Naive thymus-derived CD4-positive, alpha-beta T cell (primary cell): ENCODE measurements at regions of chr6 and their contacts with region 1.

Region 1: GRCh38 chr6:118893807-118894424 is at the start of gene ASF1A:
- DNase-seq: peak; percentile 94 to 98 (median 97)
- ATAC-seq: peak; percentile 90
- H3K4me3 ChIP-seq: peak within 1 kb of the TSS; percentile 77
- H3K4me3 Mint-ChIP-seq: peak within 1 kb of the TSS; percentile 88 to 97 (median 94)
- H3K27ac ChIP-seq: peak within 1 kb of the TSS; percentile 91
- H3K27ac Mint-ChIP-seq: peak within 1 kb of the TSS; percentile 96 to 99 (median 99)
- H3K4me1 ChIP-seq: peaks cover 47 to 52% of the 10 kb centered on the region in 2 donors
- H3K4me1 Mint-ChIP-seq: peaks cover 39 to 76% (median 69%) of the 10 kb centered on the region in 7 donors
- H3K27me3 ChIP-seq: no peaks in the 10 kb centered on the region
- H3K27me3 Mint-ChIP-seq: peaks cover 0 to 2% (median 0%) of the 10 kb centered on the region in 5 donors
- total RNA-seq, gene ASF1A: 16.5 to 63.9 (median 35.7) TPM

Region 2: DNA sequence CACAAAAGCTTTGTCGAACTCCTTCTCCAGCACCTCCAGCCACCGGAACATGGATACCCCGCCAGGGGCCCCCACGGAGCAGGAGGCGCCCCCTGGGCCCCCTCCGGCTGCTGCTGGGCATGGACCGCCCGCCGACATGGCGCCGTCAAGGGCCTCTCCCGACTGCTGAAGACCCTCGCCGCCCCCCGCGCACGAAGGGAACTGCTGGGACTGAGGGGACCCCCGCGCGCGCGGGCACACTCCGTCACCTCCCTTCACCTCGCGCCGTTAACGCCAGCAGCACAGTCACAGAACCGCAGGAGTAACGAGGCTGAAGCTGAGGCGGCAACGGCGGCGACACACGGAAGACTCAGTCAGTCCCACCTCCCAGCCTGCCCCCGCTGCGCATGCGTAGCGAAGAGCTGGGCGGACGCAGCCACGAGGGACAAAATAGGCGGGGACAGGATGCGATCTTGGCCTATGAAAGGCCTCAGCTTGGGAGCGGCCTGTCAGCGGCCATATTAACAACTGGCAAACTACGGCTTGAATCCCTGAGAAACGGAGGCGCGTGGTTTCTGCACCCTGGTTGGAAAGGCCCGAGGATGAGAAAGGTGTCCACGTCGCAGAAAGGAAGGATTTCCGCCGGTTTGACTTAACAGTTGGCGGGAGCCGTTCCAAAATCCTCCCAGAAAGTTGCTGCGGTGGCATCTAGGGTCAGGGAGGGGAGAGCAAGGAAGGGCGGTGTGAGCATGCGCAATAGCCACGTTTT is 1291.6 kb before region 1 on chr6 and contains the start of gene GOPC:
- CTCF ChIA-PET with region 1: no interaction called
- POLR2A ChIA-PET with region 1: no interaction called
- intact Hi-C with region 1: loop called in 1 of 2 experiments (anchors 1 kb)
- DNase-seq: peak; percentile 87 to 97 (median 96)
- ATAC-seq: peak; percentile 97
- H3K4me3 ChIP-seq: peak within 1 kb of the TSS; percentile 93
- H3K4me3 Mint-ChIP-seq: peak within 1 kb of the TSS; percentile 96 to 100 (median 99)
- H3K27ac ChIP-seq: peak within 1 kb of the TSS; percentile 92
- H3K27ac Mint-ChIP-seq: peak within 1 kb of the TSS; percentile 94 to 99 (median 99)
- H3K4me1 ChIP-seq: peaks cover 0 to 9% of the 10 kb centered on the region in 2 donors
- H3K4me1 Mint-ChIP-seq: peaks cover 24 to 58% (median 49%) of the 10 kb centered on the region in 7 donors
- H3K27me3 ChIP-seq: no peaks in the 10 kb centered on the region
- H3K27me3 Mint-ChIP-seq: peaks cover 0 to 5% (median 4%) of the 10 kb centered on the region in 5 donors
- total RNA-seq, gene GOPC: 16.2 to 39.4 (median 26.5) TPM

Region 3: DNA sequence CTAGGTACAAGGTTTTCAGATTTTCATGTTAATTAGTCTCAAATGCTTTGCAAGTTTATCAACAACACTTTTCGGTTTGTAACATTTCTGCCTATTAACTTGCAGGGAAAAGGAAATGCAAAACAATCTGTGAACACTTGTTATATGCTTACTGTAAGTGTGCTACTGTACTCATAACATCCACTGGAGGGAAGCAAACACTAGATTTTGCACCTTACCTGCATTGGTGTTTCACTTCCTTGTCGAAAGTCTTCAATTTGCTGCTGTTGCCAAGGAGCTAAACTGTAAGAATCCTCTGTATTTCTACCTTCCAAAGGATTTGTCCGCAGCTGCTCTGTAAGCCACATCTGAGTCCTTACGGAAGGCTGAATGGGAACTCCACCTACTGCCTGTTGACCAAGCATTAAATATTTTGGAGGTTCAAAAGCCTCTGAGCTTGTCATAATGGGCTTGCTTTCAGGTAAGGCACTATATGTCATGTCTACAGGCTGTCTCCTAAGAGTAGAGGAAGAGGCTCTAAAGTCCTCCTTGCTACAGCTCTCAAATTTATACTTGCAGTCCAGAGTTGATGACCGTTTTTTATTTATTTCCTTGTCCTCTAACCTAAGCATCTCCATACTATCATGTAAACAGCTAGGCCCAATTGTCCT is 328.5 kb before region 1 on chr6:
- CTCF ChIA-PET with region 1: interaction called, 6 read pairs
- POLR2A ChIA-PET with region 1: interaction called, 19 read pairs
- intact Hi-C with region 1: loop called (anchors 1 kb)
- DNase-seq: peak in 7 of 9 donors; percentile 55 to 77 (median 63)
- ATAC-seq: peak; percentile 94
- H3K4me3 ChIP-seq: no peak overlapping the region
- H3K4me3 Mint-ChIP-seq: no peak overlapping the region
- H3K27ac ChIP-seq: peak overlapping the region; percentile 34
- H3K27ac Mint-ChIP-seq: peak overlapping the region; percentile 16 to 90 (median 61)
- H3K4me1 ChIP-seq: no peaks in the 10 kb centered on the region
- H3K4me1 Mint-ChIP-seq: peaks cover 7 to 60% (median 42%) of the 10 kb centered on the region in 7 donors
- H3K27me3 ChIP-seq: no peaks in the 10 kb centered on the region
- H3K27me3 Mint-ChIP-seq: no peaks in the 10 kb centered on the region

Region 4: GRCh38 chr6:118800394-118801071 is 93.4 kb before region 1 on chr6:
- CTCF ChIA-PET with region 1: interaction called, 6 read pairs
- POLR2A ChIA-PET with region 1: interaction called, 48 read pairs
- intact Hi-C with region 1: loop called (anchors 1 kb)
- DNase-seq: peak; percentile 45 to 90 (median 86)
- ATAC-seq: peak; percentile 95
- H3K4me3 ChIP-seq: peak overlapping the region; percentile 22
- H3K4me3 Mint-ChIP-seq: peak overlapping the region; percentile 14 to 88 (median 68)
- H3K27ac ChIP-seq: no peak overlapping the region
- H3K27ac Mint-ChIP-seq: peak overlapping the region; percentile 73 to 93 (median 86)
- H3K4me1 ChIP-seq: peaks cover 17 to 25% of the 10 kb centered on the region in 2 donors
- H3K4me1 Mint-ChIP-seq: peaks cover 17 to 51% (median 37%) of the 10 kb centered on the region in 7 donors
- H3K27me3 ChIP-seq: no peaks in the 10 kb centered on the region
- H3K27me3 Mint-ChIP-seq: no peaks in the 10 kb centered on the region

Region 5: DNA sequence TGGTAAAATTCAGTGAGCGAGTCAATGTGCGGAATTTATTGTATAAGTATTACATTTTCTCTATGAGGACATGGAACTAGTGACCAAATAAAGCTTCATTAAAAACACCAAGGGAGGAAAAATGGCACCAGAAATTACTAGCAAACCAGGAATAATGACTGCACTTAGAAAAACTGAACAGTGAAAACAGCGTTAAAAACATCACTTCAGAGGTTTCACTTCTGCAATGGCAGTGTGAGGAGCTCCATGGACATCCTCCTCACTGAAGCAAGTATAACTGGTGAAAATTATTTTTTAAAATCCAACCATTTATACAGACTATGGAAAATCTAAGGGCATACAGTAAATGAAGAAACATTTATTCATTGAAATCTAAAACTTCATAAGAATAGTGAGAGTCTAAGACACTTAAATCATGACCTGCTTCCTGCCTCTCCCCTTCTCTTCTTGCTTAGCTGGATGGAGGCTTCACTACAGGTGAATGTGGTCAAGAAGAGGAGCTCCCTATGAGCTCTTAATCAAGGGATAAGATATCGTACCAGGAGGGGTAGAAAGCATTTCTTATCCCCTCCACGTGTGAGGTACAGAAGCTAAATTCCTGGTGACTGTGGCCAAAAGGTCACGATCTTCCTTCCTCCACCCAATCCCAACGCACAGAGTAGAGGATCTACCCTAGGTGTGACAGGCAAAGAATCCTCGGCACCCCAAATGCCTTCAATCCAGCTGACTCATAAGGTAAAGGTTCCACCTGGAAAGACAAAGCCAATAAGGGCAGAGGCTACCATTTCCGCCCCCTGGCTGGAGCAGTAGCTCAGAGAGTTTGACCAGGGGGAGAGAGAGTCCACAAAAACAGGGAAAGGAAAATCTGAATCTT is 12.2 kb before region 1 on chr6:
- CTCF ChIA-PET with region 1: interaction called, 5 read pairs
- POLR2A ChIA-PET with region 1: interaction called, 53 read pairs
- intact Hi-C with region 1: loop called in 1 of 2 experiments (anchors 1 kb)
- DNase-seq: no peak
- ATAC-seq: no peak
- H3K4me3 ChIP-seq: peak overlapping the region; percentile 21
- H3K4me3 Mint-ChIP-seq: peak overlapping the region; percentile 1 to 75 (median 50)
- H3K27ac ChIP-seq: no peak overlapping the region
- H3K27ac Mint-ChIP-seq: peak overlapping the region in 8 of 9 donors; percentile 1 to 88 (median 28)
- H3K4me1 ChIP-seq: peaks cover 22 to 25% of the 10 kb centered on the region in 2 donors
- H3K4me1 Mint-ChIP-seq: peaks cover 36 to 91% (median 87%) of the 10 kb centered on the region in 7 donors
- H3K27me3 ChIP-seq: no peaks in the 10 kb centered on the region
- H3K27me3 Mint-ChIP-seq: no peaks in the 10 kb centered on the region

Region 6: DNA sequence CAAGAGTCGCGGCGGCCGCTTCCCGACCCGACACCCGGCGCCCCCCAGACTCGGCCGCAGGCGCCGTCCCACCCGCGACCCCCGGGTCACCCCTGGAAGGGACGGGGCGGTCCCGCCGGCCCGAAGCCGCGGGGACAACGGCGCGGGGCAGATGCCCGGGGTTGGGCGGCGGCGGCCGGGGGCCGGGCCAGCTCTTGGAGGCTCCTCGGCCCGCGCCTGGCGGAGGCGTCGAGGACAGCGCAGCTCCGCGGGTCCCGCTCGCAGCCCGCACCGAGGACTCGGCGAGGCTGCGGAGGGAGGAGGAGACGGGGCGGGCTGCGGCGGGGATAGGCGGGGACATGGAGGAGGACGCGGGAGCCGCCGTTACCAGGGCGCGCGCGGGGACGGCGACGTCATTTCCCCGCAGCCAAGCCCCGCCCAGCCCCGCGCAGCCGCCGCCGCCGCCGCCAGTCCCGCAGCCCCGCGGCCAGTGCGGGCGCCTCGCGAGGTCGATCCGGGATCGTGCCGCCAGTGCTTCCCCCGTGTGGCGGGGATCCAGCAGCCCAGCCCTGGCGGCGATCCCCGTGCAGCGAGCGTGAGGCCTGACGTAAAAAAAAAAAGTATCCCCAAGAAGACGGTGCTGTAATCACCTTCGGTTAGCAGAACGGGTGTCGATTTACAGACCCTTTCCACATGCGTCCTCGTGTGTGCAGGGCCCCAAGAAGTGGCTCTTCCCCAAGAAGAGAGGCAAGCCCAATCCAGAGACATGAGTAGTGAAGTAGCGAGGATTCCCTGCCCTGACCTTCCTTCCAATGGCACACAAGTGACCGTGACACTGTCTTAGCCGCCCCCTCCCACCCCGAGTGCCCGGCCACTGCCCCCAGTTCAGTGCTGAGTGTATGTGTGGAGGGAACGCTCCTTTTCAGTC is 184.7 kb after region 1 on chr6 and contains the start of gene FAM184A:
- CTCF ChIA-PET with region 1: no interaction called
- POLR2A ChIA-PET with region 1: interaction called, 4 read pairs
- intact Hi-C with region 1: loop called (anchors 1 kb)
- DNase-seq: peak; percentile 74 to 86 (median 82)
- ATAC-seq: peak; percentile 79
- H3K4me3 ChIP-seq: peak within 1 kb of the TSS; percentile 77
- H3K4me3 Mint-ChIP-seq: peak within 1 kb of the TSS; percentile 75 to 97 (median 94)
- H3K27ac ChIP-seq: peak within 1 kb of the TSS; percentile 74
- H3K27ac Mint-ChIP-seq: peak within 1 kb of the TSS; percentile 66 to 97 (median 95)
- H3K4me1 ChIP-seq: peaks cover 5 to 25% of the 10 kb centered on the region in 2 donors
- H3K4me1 Mint-ChIP-seq: peaks cover 14 to 50% (median 39%) of the 10 kb centered on the region in 7 donors
- H3K27me3 ChIP-seq: no peaks in the 10 kb centered on the region
- H3K27me3 Mint-ChIP-seq: peaks cover 0 to 9% (median 0%) of the 10 kb centered on the region in 5 donors
- total RNA-seq, gene FAM184A: 5.3 to 9.8 (median 7.9) TPM